Endothelial cell of umbilical vein (primary cell): ENCODE measurements at regions of chr5 and their contacts with region 1.

Region 1: GRCh38 chr5:122091936-122092600 is 14.0 kb upstream of the LOX start:
- DNase-seq: peak; percentile 48
- H3K4me3 ChIP-seq: no peak overlapping the region
- H3K27ac ChIP-seq: no peak overlapping the region
- H3K4me1 ChIP-seq: peaks cover 19% of the 10 kb centered on the region
- H3K27me3 ChIP-seq: no peaks in the 10 kb centered on the region
- CTCF ChIP-seq: peak; percentile 26 to 32
- POLR2A ChIP-seq: no peak

Region 2: DNA sequence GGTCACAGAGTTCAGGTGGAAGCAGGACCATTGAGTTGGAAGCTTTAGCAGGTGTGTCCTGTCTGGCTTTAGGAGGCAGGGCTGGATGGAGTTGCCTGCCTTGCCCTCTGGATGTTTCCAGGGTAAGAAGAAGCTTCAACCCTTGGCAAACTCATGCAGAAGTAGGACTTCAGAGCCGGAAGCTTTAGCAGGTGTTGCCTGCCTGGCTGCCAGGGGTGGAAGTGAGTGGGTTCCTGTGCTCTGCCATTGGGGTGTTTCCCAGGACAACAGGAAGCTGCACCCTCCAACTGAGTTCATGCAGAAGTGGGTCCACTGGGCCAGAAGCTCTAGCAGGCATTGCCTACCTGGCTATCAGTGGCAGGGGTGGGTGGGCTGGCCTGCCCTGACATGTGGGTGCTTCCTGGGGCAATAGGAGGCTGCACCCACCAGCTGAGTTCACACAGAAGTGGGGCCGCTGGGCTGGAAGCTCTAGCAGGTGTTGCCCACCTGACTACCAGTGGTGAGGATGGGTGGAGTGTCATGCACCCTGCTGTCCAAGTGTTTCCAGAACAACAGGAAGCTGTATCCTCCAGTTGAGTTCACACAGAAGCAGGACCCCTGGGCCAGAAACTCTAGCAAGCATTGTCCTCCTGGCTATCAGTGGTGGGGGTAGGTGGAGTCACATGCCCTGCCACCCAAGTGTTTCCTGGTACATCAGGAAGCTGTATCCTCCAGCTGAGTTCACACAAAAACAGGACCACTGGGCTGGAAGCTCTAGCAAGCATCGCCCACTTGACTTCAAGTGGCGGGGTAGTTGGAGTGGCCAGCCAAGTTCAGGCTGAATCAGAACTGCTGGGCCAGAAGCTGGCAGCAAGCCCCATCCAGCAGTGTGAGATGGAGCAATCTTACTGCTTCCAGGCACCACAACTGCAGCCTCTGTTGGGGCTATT is 38.6 kb before region 1 on chr5:
- CTCF ChIA-PET with region 1: no interaction called
- POLR2A ChIA-PET with region 1: no interaction called
- dilution Hi-C with region 1: no loop called
- intact Hi-C with region 1: no loop called
- DNase-seq: peak; percentile 40
- H3K4me3 ChIP-seq: no peak overlapping the region
- H3K27ac ChIP-seq: no peak overlapping the region
- H3K4me1 ChIP-seq: no peaks in the 10 kb centered on the region
- H3K27me3 ChIP-seq: no peaks in the 10 kb centered on the region
- CTCF ChIP-seq: no peak
- POLR2A ChIP-seq: no peak

Region 3: DNA sequence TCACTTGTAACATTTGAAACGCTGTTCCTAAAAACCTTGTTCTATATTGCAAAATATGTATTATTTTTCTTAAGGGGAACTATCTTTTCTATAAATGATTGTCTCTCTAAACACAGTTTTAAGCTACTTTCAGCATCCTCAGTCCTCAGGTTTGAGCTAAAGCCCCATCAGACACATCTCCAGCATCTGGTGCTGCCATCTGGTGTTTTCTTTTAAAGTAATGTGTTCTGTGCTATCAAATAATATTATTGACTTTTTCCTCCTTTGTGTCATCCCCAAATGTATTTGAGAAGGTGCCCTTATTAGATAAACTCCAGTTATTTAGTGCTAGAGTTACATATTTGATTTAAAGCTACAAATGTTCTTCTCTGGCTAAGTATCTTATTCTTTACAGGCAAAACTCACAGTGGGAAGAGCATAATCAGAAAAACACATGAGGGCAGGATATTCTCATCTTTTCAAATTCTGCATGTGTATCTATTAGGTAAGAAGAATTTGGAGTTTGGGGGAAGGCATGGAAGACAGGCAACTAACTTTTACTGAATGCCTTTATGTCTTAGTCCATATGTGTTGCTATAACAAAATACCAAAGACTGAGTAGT is 64.8 kb after region 1 on chr5:
- CTCF ChIA-PET with region 1: interaction called, 55 read pairs
- POLR2A ChIA-PET with region 1: no interaction called
- dilution Hi-C with region 1: no loop called
- intact Hi-C with region 1: loop called (anchors 2 kb)
- DNase-seq: peak; percentile 42
- H3K4me3 ChIP-seq: no peak overlapping the region
- H3K27ac ChIP-seq: no peak overlapping the region
- H3K4me1 ChIP-seq: peaks cover 8% of the 10 kb centered on the region
- H3K27me3 ChIP-seq: no peaks in the 10 kb centered on the region
- CTCF ChIP-seq: peak in 1 of 2 donors; percentile 19
- POLR2A ChIP-seq: no peak